Activated CD4-positive, alpha-beta T cell treated with anti-CD3 and anti-CD28 coated beads for 36 hours (primary cell): ENCODE measurements at regions of chr12 and their contacts with region 1.

Region 1: GRCh38 chr12:89542912-89543592 is 17.2 kb upstream of the POC1B start:
- DNase-seq: peak; percentile 77
- ATAC-seq: peak; percentile 87
- H3K4me3 Mint-ChIP-seq: no peak overlapping the region
- H3K27ac Mint-ChIP-seq: no peak overlapping the region
- H3K4me1 Mint-ChIP-seq: peaks cover 4% of the 10 kb centered on the region
- H3K27me3 Mint-ChIP-seq: peaks cover 3% of the 10 kb centered on the region

Region 2: GRCh38 chr12:89927226-89927698 is 384.2 kb after region 1 on chr12:
- CTCF ChIA-PET with region 1: no interaction called
- POLR2A ChIA-PET with region 1: no interaction called
- intact Hi-C with region 1: no loop called
- DNase-seq: no peak
- ATAC-seq: no peak
- H3K4me3 Mint-ChIP-seq: no peak overlapping the region
- H3K27ac Mint-ChIP-seq: no peak overlapping the region
- H3K4me1 Mint-ChIP-seq: peaks cover 8% of the 10 kb centered on the region
- H3K27me3 Mint-ChIP-seq: no peaks in the 10 kb centered on the region

Region 3: DNA sequence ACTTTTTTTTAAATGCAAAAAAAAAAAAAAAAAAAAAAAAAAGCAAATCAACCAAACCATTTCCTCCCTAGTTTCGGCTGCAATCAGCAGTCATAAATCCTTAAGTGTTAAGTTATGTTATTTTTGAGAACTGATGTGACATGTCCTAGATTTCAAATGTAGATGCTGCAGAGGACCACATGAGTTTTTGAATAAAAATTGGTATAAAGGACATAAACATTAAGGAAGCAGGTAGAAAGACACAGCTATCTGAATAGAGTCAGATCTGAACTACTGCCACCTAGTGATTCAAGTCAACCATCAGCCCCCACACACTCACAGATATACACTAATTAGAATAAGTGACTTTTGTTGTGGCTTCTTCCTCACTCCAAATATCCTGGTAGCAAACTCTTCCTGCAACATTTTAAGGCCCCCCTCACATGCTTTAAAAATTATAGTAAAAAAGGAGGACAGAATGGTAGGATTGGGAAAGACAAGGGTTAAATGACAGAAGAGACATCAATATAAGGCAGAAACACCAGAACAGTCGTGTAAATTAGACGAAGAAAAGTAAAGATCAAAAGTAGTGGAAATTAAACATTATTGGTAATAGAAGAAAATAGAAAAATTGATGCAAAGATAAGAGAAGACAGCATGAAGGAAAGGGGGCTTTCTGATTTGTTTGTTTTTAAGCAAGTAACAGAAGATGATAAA is 560.1 kb after region 1 on chr12:
- CTCF ChIA-PET with region 1: interaction called, 21 read pairs
- POLR2A ChIA-PET with region 1: no interaction called
- intact Hi-C with region 1: loop called (anchors 1 to 2 kb)
- DNase-seq: peak; percentile 19
- ATAC-seq: peak; percentile 73
- H3K4me3 Mint-ChIP-seq: no peak overlapping the region
- H3K27ac Mint-ChIP-seq: no peak overlapping the region
- H3K4me1 Mint-ChIP-seq: peaks cover 15% of the 10 kb centered on the region
- H3K27me3 Mint-ChIP-seq: peaks cover 2% of the 10 kb centered on the region

Region 4: DNA sequence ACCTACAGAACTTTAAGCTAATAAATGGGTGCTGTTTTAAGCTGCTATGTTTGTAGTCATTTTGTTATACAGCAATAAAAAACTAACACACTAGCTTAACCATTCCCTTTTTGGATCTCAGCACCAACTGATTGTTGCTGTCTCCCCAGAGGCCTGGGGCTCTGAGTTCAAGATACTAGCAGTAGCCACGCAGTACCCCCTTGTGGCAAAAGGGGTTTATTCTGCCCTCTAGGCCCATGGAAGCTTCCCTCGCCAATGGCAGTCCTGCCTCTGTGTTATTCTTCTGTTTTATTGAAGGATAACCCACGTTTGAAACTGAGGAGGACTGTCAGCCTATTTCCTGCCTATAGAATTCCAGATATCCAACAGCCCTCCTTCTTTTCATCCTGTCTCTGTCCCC is 620.9 kb after region 1 on chr12:
- CTCF ChIA-PET with region 1: interaction called, 4 read pairs
- POLR2A ChIA-PET with region 1: no interaction called
- intact Hi-C with region 1: loop called in 1 of 2 experiments (anchors 5 kb)
- DNase-seq: peak; percentile 34
- ATAC-seq: no peak
- H3K4me3 Mint-ChIP-seq: no peak overlapping the region
- H3K27ac Mint-ChIP-seq: no peak overlapping the region
- H3K4me1 Mint-ChIP-seq: no peaks in the 10 kb centered on the region
- H3K27me3 Mint-ChIP-seq: no peaks in the 10 kb centered on the region

Region 5: GRCh38 chr12:90253674-90254181 is 710.7 kb after region 1 on chr12:
- CTCF ChIA-PET with region 1: no interaction called
- POLR2A ChIA-PET with region 1: no interaction called
- intact Hi-C with region 1: loop called (anchors 10 kb)
- DNase-seq: peak; percentile 65
- ATAC-seq: peak; percentile 79
- H3K4me3 Mint-ChIP-seq: no peak overlapping the region
- H3K27ac Mint-ChIP-seq: no peak overlapping the region
- H3K4me1 Mint-ChIP-seq: peaks cover 11% of the 10 kb centered on the region
- H3K27me3 Mint-ChIP-seq: no peaks in the 10 kb centered on the region

Region 6: GRCh38 chr12:90854136-90854689 is 1311.2 kb after region 1 on chr12:
- CTCF ChIA-PET with region 1: no interaction called
- POLR2A ChIA-PET with region 1: no interaction called
- intact Hi-C with region 1: loop called (anchors 1 to 5 kb)
- DNase-seq: peak; percentile 25
- ATAC-seq: peak; percentile 51
- H3K4me3 Mint-ChIP-seq: no peak overlapping the region
- H3K27ac Mint-ChIP-seq: no peak overlapping the region
- H3K4me1 Mint-ChIP-seq: peaks cover 3% of the 10 kb centered on the region
- H3K27me3 Mint-ChIP-seq: no peaks in the 10 kb centered on the region

Region 7: GRCh38 chr12:90940872-90941499 is 1397.9 kb after region 1 on chr12:
- CTCF ChIA-PET with region 1: no interaction called
- POLR2A ChIA-PET with region 1: no interaction called
- intact Hi-C with region 1: loop called (anchors 2 to 5 kb)
- DNase-seq: no peak
- ATAC-seq: no peak
- H3K4me3 Mint-ChIP-seq: no peak overlapping the region
- H3K27ac Mint-ChIP-seq: no peak overlapping the region
- H3K4me1 Mint-ChIP-seq: no peaks in the 10 kb centered on the region
- H3K27me3 Mint-ChIP-seq: peaks cover 4% of the 10 kb centered on the region

Region 8: DNA sequence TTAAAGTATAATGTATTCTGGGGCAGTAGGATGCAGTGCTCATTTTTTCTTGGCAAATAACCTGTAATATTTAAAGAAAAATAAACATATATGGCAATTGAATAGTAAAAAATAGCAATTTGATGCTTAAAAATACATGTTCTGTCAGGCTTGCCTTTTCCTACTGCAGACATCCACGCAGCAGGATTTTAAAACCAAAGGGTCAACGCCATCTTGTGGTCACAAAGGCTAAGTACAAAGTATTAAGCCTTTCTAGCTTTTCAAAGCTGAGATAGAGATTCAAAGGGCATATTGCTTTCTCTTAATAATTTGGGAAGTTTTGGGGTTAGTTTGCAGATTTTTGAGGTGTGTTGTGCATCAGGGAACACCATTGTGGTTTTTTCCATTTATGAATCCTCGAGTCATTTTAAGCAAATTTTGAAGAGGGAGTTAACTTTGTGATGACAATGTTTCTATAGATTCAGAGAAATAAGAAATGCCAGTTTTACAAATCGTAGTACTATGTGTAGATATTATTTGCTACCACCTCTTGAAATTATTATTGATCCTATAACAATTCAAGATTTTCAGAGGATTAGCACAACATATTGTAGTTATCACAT is 1416.6 kb after region 1 on chr12:
- CTCF ChIA-PET with region 1: no interaction called
- POLR2A ChIA-PET with region 1: no interaction called
- intact Hi-C with region 1: loop called in 1 of 2 experiments (anchors 2 kb)
- DNase-seq: peak; percentile 27
- ATAC-seq: peak; percentile 51
- H3K4me3 Mint-ChIP-seq: no peak overlapping the region
- H3K27ac Mint-ChIP-seq: no peak overlapping the region
- H3K4me1 Mint-ChIP-seq: no peaks in the 10 kb centered on the region
- H3K27me3 Mint-ChIP-seq: no peaks in the 10 kb centered on the region